Endothelial cell of umbilical vein (primary cell): ENCODE measurements at regions of chr16 and their contacts with region 1.

Region 1: DNA sequence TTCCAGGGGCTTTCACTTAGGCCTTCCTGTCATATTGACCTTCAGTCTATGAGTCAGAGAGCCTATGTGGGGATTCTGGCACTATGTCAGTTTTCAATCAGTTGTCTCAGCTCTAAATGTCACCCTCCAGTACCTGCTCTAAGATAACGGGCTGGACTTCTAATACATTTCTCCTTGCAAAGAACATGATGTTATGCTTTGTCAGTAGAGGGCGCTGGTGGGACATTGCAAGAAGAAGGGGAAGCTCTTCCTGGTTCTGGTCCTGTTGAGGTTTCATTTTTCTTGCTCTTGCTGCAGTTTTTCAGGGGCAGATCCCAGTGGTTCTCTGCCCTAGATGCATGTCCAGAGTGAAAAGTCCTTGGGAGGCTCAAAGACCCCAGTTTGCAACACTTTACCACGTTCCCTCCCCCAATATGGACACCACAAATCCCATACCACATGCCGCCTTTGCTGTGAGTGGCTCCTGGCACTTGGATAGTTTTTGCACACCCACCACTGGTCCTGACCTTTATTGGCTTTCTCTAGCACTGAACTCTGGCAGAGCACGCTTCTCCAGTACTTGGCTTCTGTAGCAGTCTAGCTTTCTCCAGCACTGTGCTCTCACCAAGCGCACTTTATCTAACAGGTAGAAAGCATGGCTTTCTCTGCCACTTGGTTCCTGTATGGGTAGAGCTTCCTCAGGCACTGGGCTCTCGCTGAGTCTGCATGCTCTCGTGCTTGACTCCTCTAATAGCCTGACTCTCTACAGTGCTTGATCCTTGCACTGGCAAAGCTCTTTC is 49.0 kb downstream of the BCL7C start:
- DNase-seq: peak; percentile 81
- H3K4me3 ChIP-seq: no peak overlapping the region
- H3K27ac ChIP-seq: no peak overlapping the region
- H3K4me1 ChIP-seq: no peaks in the 10 kb centered on the region
- H3K27me3 ChIP-seq: no peaks in the 10 kb centered on the region
- CTCF ChIP-seq: peak; percentile 80 to 82
- POLR2A ChIP-seq: no peak

Region 2: GRCh38 chr16:30813821-30814189 is 31.1 kb before region 1 on chr16:
- CTCF ChIA-PET with region 1: interaction called, 19 read pairs
- POLR2A ChIA-PET with region 1: no interaction called
- dilution Hi-C with region 1: no loop called
- intact Hi-C with region 1: loop called (anchors 1 kb)
- DNase-seq: no peak
- H3K4me3 ChIP-seq: peak overlapping the region; percentile 2 to 26 (median 10)
- H3K27ac ChIP-seq: peak overlapping the region; percentile 44
- H3K4me1 ChIP-seq: peaks cover 4% of the 10 kb centered on the region
- H3K27me3 ChIP-seq: no peaks in the 10 kb centered on the region
- CTCF ChIP-seq: no peak
- POLR2A ChIP-seq: no peak

Region 3: GRCh38 chr16:30858829-30859423 is 14.1 kb after region 1 on chr16:
- CTCF ChIA-PET with region 1: interaction called, 45 read pairs
- POLR2A ChIA-PET with region 1: no interaction called
- dilution Hi-C with region 1: no loop called
- intact Hi-C with region 1: no loop called
- DNase-seq: no peak
- H3K4me3 ChIP-seq: no peak overlapping the region
- H3K27ac ChIP-seq: no peak overlapping the region
- H3K4me1 ChIP-seq: no peaks in the 10 kb centered on the region
- H3K27me3 ChIP-seq: no peaks in the 10 kb centered on the region
- CTCF ChIP-seq: no peak
- POLR2A ChIP-seq: no peak

Region 4: DNA sequence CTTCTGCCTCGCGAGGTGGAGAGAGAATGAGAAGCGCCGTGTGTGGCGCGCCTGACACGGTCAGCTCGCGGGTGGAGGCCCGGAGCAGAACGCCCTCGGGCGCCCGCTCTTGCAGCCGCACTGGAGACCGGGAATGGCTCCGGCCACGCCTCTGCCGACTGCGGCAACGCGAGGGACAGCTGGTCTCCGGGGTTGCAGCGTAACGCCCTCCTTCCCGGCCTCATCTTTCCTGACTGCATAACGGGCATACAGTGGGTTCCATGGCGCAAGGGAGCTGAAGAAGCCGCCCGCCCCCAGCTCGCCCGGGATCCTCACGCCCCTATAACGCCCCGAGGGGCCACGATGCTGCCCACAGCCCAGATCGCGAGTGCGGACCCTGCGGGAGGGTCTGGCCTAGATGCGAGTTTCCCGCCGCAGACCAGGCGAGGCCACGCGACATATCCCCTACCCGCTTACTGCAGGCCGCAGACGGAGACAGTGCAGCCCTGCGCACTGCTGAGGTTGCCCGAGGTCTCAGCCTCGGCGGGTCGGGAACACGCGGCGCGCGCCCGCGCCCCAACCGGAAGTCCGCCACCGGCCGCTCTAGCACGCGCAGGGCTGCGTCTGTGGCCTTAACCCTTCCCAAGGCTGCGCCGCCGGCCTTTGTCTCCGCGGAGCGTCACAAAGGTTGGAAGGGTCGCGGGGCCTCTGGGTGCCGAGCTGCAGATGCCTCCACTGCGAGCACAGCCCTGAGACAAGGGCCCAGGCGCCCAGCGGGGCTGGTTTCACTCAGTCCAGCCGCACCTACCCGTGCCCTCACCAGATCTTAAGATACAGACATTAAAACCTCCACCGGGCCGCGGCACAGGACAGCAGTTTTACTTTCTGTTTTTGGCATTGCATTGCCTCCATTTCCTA is 30.2 kb after region 1 on chr16:
- CTCF ChIA-PET with region 1: interaction called, 29 read pairs
- POLR2A ChIA-PET with region 1: interaction called, 4 read pairs
- dilution Hi-C with region 1: no loop called
- intact Hi-C with region 1: loop called (anchors 1 kb)
- DNase-seq: peak; percentile 91
- H3K4me3 ChIP-seq: peak overlapping the region; percentile 66 to 83 (median 80)
- H3K27ac ChIP-seq: peak overlapping the region; percentile 85
- H3K4me1 ChIP-seq: peaks cover 20% of the 10 kb centered on the region
- H3K27me3 ChIP-seq: no peaks in the 10 kb centered on the region
- CTCF ChIP-seq: no peak
- POLR2A ChIP-seq: peak; percentile 99

Region 5: DNA sequence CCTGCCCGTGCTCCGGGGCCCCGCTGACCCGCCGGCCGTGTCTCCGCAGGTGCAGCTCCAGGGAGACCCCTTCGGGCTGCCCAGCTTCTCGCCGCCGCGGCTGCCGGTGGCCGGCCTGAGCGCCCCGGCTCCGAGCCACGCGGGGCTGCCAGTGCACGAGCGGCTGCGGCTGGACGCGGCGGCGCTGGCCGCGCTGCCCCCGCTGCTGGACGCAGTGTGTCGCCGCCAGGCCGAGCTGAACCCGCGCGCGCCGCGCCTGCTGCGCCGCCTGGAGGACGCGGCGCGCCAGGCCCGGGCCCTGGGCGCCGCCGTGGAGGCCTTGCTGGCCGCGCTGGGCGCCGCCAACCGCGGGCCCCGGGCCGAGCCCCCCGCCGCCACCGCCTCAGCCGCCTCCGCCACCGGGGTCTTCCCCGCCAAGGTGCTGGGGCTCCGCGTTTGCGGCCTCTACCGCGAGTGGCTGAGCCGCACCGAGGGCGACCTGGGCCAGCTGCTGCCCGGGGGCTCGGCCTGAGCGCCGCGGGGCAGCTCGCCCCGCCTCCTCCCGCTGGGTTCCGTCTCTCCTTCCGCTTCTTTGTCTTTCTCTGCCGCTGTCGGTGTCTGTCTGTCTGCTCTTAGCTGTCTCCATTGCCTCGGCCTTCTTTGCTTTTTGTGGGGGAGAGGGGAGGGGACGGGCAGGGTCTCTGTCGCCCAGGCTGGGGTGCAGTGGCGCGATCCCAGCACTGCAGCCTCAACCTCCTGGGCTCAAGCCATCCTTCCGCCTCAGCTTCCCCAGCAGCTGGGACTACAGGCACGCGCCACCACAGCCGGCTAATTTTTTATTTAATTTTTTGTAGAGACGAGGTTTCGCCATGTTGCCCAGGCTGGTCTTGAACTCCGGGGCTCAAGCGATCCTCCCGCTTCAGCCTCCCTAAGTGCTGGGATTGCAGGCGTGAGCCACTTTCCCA is 57.4 kb after region 1 on chr16:
- CTCF ChIA-PET with region 1: interaction called, 128 read pairs
- POLR2A ChIA-PET with region 1: interaction called, 6 read pairs
- dilution Hi-C with region 1: no loop called
- intact Hi-C with region 1: loop called (anchors 1 kb)
- DNase-seq: peak; percentile 67
- H3K4me3 ChIP-seq: peak overlapping the region; percentile 12 to 34 (median 31)
- H3K27ac ChIP-seq: peak overlapping the region; percentile 83
- H3K4me1 ChIP-seq: peaks cover 24% of the 10 kb centered on the region
- H3K27me3 ChIP-seq: no peaks in the 10 kb centered on the region
- CTCF ChIP-seq: peak; percentile 16 to 34
- POLR2A ChIP-seq: peak; percentile 90

Region 6: GRCh38 chr16:30941600-30942425 is 97.0 kb after region 1 on chr16:
- CTCF ChIA-PET with region 1: interaction called, 60 read pairs
- POLR2A ChIA-PET with region 1: no interaction called
- dilution Hi-C with region 1: no loop called
- intact Hi-C with region 1: loop called (anchors 1 kb)
- DNase-seq: peak; percentile 75
- H3K4me3 ChIP-seq: no peak overlapping the region
- H3K27ac ChIP-seq: no peak overlapping the region
- H3K4me1 ChIP-seq: peaks cover 2% of the 10 kb centered on the region
- H3K27me3 ChIP-seq: no peaks in the 10 kb centered on the region
- CTCF ChIP-seq: peak; percentile 90 to 96
- POLR2A ChIP-seq: no peak

Region 7: GRCh38 chr16:30984669-30985400 is 140.0 kb after region 1 on chr16 and contains the start of gene HSD3B7:
- CTCF ChIA-PET with region 1: no interaction called
- POLR2A ChIA-PET with region 1: no interaction called
- dilution Hi-C with region 1: no loop called
- intact Hi-C with region 1: no loop called
- DNase-seq: peak; percentile 69
- H3K4me3 ChIP-seq: peak within 1 kb of the TSS in 1 of 3 experiments; percentile 19
- H3K27ac ChIP-seq: no peak within 1 kb of the TSS
- H3K4me1 ChIP-seq: no peaks in the 10 kb centered on the region
- H3K27me3 ChIP-seq: no peaks in the 10 kb centered on the region
- CTCF ChIP-seq: peak; percentile 93 to 97
- POLR2A ChIP-seq: no peak
- total RNA-seq, gene HSD3B7: 2.9 and 3.5 TPM in 2 replicates